IMR-90 (cell line): ENCODE measurements at regions of chr11 and their contacts with region 1.

Region 1: GRCh38 chr11:79352349-79352703 is 88.5 kb downstream of the TENM4 start:
- DNase-seq: no peak
- ATAC-seq: no peak
- H3K4me3 ChIP-seq: no peak overlapping the region
- H3K27ac ChIP-seq: no peak overlapping the region
- H3K4me1 ChIP-seq: no peaks in the 10 kb centered on the region
- H3K27me3 ChIP-seq: no peaks in the 10 kb centered on the region; the same call in 1 of the 2 replicates
- CTCF ChIP-seq: no peak
- POLR2A ChIP-seq: no peak
- RAD21 ChIP-seq: no peak

Region 2: DNA sequence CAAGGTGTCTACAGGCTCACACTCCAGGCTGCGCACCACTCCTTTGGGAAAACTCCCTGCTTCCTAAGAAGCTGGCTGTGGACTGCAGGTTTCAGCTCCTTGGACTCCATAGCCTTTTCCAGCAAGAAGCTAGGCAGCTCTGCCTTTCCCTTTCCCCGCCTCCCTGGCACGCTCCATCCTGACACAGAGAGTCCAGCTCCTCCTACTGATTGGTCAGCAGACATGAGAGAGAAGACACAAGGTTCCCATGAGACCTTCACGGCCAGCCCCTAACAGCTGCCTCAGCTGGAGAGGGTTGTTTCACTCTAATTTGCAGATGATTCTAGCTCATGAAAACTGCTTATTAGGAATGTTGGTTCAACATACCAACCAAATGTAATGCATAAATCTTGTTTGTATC is 60.9 kb after region 1 on chr11:
- CTCF ChIA-PET with region 1: no interaction called
- POLR2A ChIA-PET with region 1: no interaction called
- dilution Hi-C with region 1: no loop called
- in situ Hi-C with region 1: no loop called
- intact Hi-C with region 1: loop called (anchors 5 kb)
- DNase-seq: peak; percentile 94
- ATAC-seq: peak; percentile 95
- H3K4me3 ChIP-seq: no peak overlapping the region
- H3K27ac ChIP-seq: no peak overlapping the region; the same call in 1 of the 2 replicates
- H3K4me1 ChIP-seq: peaks cover 19% of the 10 kb centered on the region
- H3K27me3 ChIP-seq: no peaks in the 10 kb centered on the region
- CTCF ChIP-seq: no peak
- POLR2A ChIP-seq: no peak
- RAD21 ChIP-seq: 0 out of 2 replicates have a peak, but pooled peaks have one; percentile 11